A673 (cell line): ENCODE measurements at regions of chr2 and their contacts with region 1.

Region 1: GRCh38 chr2:226649871-226650660 is 149.6 kb downstream of the IRS1 start:
- DNase-seq: peak; percentile 99
- H3K4me3 ChIP-seq: peak overlapping the region; percentile 1
- H3K27ac ChIP-seq: peak overlapping the region; percentile 79
- H3K4me1 ChIP-seq: peaks cover 45% of the 10 kb centered on the region
- H3K27me3 ChIP-seq: no peaks in the 10 kb centered on the region
- CTCF ChIP-seq: no peak

Region 2: GRCh38 chr2:226124548-226125011 is 525.5 kb before region 1 on chr2:
- CTCF ChIA-PET with region 1: no interaction called
- POLR2A ChIA-PET with region 1: no interaction called
- intact Hi-C with region 1: loop called (anchors 5 kb)
- DNase-seq: no peak
- H3K4me3 ChIP-seq: no peak overlapping the region
- H3K27ac ChIP-seq: no peak overlapping the region
- H3K4me1 ChIP-seq: peaks cover 54% of the 10 kb centered on the region
- H3K27me3 ChIP-seq: no peaks in the 10 kb centered on the region
- CTCF ChIP-seq: no peak

Region 3: GRCh38 chr2:226431288-226431948 is 218.6 kb before region 1 on chr2:
- CTCF ChIA-PET with region 1: no interaction called
- POLR2A ChIA-PET with region 1: no interaction called
- intact Hi-C with region 1: loop called (anchors 2 kb)
- DNase-seq: peak; percentile 97
- H3K4me3 ChIP-seq: no peak overlapping the region
- H3K27ac ChIP-seq: peak overlapping the region; percentile 65
- H3K4me1 ChIP-seq: peaks cover 37% of the 10 kb centered on the region
- H3K27me3 ChIP-seq: no peaks in the 10 kb centered on the region
- CTCF ChIP-seq: no peak

Region 4: GRCh38 chr2:226791487-226792081 is 141.5 kb after region 1 on chr2:
- CTCF ChIA-PET with region 1: no interaction called
- POLR2A ChIA-PET with region 1: no interaction called
- intact Hi-C with region 1: loop called (anchors 2 kb)
- DNase-seq: peak; percentile 93
- H3K4me3 ChIP-seq: peak overlapping the region; percentile 91
- H3K27ac ChIP-seq: peak overlapping the region; percentile 89
- H3K4me1 ChIP-seq: peaks cover 56% of the 10 kb centered on the region
- H3K27me3 ChIP-seq: no peaks in the 10 kb centered on the region
- CTCF ChIP-seq: peak; percentile 23; the same call in 1 of the 2 replicates

Region 5: DNA sequence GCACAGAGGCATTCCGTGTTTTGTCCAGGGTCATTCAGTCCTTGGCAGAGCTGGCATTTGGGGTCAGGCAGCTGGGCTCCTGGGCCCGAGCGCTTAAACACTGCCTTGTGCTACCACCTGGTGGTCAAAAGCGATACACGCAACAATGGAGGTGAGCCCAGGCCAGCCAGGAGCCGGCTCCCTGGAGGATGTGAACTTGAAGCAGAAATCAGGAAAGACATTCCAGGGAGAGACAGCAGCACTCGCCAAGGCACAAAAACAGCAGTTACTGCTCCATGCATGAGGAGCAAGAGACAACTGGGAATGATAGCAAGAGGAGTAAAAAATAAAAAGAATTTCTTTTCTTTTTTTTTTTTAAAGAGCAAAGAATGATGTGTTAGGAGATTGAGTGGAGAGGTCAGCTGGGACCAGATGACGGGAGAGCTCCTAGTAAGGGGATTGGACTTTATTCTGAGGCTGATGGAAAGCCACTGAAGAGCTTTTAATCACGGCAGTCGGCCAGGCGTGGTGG is 1116.4 kb after region 1 on chr2:
- CTCF ChIA-PET with region 1: no interaction called
- POLR2A ChIA-PET with region 1: no interaction called
- intact Hi-C with region 1: no loop called
- DNase-seq: peak; percentile 79
- H3K4me3 ChIP-seq: no peak overlapping the region
- H3K27ac ChIP-seq: no peak overlapping the region
- H3K4me1 ChIP-seq: peaks cover 9% of the 10 kb centered on the region
- H3K27me3 ChIP-seq: no peaks in the 10 kb centered on the region
- CTCF ChIP-seq: peak; percentile 92